Posterior vena cava (tissue), 2 donors: ENCODE measurements at regions of chr1 and their contacts with region 1.

Region 1: GRCh38 chr1:23634842-23635651 is 56.6 kb upstream of the RPL11 start:
- DNase-seq: peak; percentile 86

Region 2: DNA sequence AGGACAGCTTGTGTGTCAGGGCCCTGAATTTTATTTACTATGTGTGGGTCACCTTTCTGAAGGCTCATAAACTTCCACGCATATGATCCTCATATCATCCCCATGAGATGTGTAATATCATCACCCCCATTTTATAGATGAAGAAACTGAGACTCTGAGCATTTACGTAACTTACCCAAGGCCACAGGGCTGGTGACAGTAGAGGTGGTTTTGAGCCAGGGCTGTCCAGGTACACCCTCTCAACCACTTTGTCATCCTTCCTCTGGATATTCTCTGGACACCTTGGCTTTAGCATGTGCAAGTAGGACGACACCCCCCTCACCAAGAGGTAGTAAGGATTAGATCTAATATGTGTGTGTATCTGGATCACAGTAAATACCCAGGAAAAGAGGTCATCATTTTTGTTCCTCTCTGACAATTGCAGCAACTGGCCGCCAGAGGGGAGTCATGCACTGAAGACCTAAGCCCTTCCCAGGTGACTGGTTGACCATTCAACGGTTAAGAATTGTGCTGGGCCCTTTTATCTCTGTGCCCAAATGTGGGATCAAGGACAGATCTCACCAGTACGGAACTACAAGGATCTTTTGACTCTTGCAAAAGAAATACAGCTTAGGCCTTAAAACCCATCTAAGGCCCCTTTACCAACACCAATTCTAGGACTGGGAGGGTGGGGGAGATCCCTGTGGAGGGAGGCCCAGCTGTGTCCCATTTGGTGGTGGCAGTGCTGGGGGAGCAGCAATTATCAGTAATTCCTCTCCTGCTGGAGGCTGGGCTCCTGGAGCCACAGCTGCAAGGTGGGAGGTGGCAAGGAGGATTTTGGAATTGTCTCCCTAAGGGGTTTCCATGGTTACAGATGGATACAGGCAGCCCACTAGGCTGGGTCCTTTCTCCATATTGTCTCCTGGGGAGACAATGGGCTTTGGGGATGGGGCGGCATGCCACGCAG is 90.3 kb before region 1 on chr1:
- intact Hi-C with region 1: loop called (anchors 2 kb)
- DNase-seq: peak; percentile 91

Region 3: GRCh38 chr1:23585447-23586015 is 49.5 kb before region 1 on chr1:
- intact Hi-C with region 1: no loop called
- DNase-seq: no peak

Region 4: GRCh38 chr1:23598424-23598823 is 36.6 kb before region 1 on chr1:
- intact Hi-C with region 1: loop called in 1 of 2 experiments (anchors 5 kb)
- DNase-seq: no peak